CD4-positive, alpha-beta memory T cell (primary cell): ENCODE measurements at regions of chr11 and their contacts with region 1.

Region 1: DNA sequence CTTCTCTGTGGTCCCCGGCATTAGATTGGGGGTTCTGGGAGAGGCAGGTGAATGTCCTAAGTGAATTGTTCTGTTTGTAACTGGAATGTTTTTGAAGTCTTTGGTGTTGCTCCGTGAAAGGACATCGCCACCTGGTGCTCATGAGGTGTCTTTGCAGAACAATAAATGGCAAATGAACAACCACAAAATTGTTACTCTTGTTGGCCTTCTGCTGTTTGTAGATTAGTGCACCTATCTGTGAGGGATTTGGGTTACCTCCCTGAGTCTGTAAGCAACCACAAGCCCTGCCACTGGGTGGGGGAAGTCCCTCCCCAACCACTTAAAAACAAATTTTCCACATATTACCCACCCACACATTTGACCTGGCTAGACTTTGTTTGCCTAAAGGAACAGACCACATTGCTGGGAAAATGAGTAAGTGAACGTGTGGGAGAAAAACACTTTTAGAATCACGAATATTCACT is 4.7 kb downstream of the MPEG1 start:
- DNase-seq: peak; percentile 40 to 57 (median 53)
- H3K4me3 ChIP-seq: no peak overlapping the region
- H3K4me3 Mint-ChIP-seq: peak overlapping the region in 7 of 8 donors; percentile 40 to 82 (median 68)
- H3K27ac ChIP-seq: no peak overlapping the region
- H3K27ac Mint-ChIP-seq: peak overlapping the region in 6 of 7 donors; percentile 53 to 95 (median 86)
- H3K4me1 ChIP-seq: peaks cover 15% of the 10 kb centered on the region
- H3K4me1 Mint-ChIP-seq: peaks cover 11 to 33% (median 22%) of the 10 kb centered on the region in 4 donors
- H3K27me3 ChIP-seq: no peaks in the 10 kb centered on the region
- H3K27me3 Mint-ChIP-seq: no peaks in the 10 kb centered on the region

Region 2: GRCh38 chr11:59180168-59180776 is 27.7 kb before region 1 on chr11:
- CTCF ChIA-PET with region 1: interaction called, 26 read pairs
- POLR2A ChIA-PET with region 1: no interaction called
- intact Hi-C with region 1: no loop called
- DNase-seq: no peak
- H3K4me3 ChIP-seq: no peak overlapping the region
- H3K4me3 Mint-ChIP-seq: no peak overlapping the region
- H3K27ac ChIP-seq: no peak overlapping the region
- H3K27ac Mint-ChIP-seq: no peak overlapping the region
- H3K4me1 ChIP-seq: no peaks in the 10 kb centered on the region
- H3K4me1 Mint-ChIP-seq: peaks cover 0 to 1% (median 0%) of the 10 kb centered on the region in 4 donors
- H3K27me3 ChIP-seq: no peaks in the 10 kb centered on the region
- H3K27me3 Mint-ChIP-seq: no peaks in the 10 kb centered on the region

Region 3: GRCh38 chr11:59186130-59186594 is 21.9 kb before region 1 on chr11:
- CTCF ChIA-PET with region 1: interaction called, 26 read pairs
- POLR2A ChIA-PET with region 1: no interaction called
- intact Hi-C with region 1: no loop called
- DNase-seq: peak; percentile 37 to 56 (median 43)
- H3K4me3 ChIP-seq: no peak overlapping the region
- H3K4me3 Mint-ChIP-seq: no peak overlapping the region
- H3K27ac ChIP-seq: no peak overlapping the region
- H3K27ac Mint-ChIP-seq: no peak overlapping the region
- H3K4me1 ChIP-seq: no peaks in the 10 kb centered on the region
- H3K4me1 Mint-ChIP-seq: no peaks in the 10 kb centered on the region
- H3K27me3 ChIP-seq: no peaks in the 10 kb centered on the region
- H3K27me3 Mint-ChIP-seq: peaks cover 0 to 2% of the 10 kb centered on the region in 2 donors

Region 4: DNA sequence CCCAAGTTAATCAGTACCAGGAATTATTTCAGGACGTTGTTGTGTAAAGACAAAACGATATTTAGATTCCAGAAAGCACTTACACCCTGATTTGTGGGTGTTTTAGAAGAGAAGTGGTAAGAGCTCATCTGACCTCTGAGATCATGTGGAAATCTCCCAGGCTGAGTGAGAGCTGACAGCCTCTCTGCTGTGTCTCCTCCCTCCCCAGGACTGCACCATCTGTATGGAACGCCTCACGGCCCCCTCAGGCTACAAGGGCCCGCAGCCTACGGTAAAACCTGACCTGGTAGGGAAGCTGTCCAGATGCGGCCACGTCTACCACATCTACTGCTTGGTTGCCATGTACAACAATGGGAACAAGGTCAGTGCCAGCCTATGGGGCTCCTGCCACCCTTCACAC is 16.1 kb before region 1 on chr11:
- CTCF ChIA-PET with region 1: interaction called, 26 read pairs
- POLR2A ChIA-PET with region 1: no interaction called
- intact Hi-C with region 1: no loop called
- DNase-seq: no peak
- H3K4me3 ChIP-seq: no peak overlapping the region
- H3K4me3 Mint-ChIP-seq: no peak overlapping the region
- H3K27ac ChIP-seq: no peak overlapping the region
- H3K27ac Mint-ChIP-seq: no peak overlapping the region
- H3K4me1 ChIP-seq: no peaks in the 10 kb centered on the region
- H3K4me1 Mint-ChIP-seq: peaks cover 0 to 4% (median 3%) of the 10 kb centered on the region in 4 donors
- H3K27me3 ChIP-seq: no peaks in the 10 kb centered on the region
- H3K27me3 Mint-ChIP-seq: peaks cover 0 to 2% of the 10 kb centered on the region in 2 donors

Region 5: DNA sequence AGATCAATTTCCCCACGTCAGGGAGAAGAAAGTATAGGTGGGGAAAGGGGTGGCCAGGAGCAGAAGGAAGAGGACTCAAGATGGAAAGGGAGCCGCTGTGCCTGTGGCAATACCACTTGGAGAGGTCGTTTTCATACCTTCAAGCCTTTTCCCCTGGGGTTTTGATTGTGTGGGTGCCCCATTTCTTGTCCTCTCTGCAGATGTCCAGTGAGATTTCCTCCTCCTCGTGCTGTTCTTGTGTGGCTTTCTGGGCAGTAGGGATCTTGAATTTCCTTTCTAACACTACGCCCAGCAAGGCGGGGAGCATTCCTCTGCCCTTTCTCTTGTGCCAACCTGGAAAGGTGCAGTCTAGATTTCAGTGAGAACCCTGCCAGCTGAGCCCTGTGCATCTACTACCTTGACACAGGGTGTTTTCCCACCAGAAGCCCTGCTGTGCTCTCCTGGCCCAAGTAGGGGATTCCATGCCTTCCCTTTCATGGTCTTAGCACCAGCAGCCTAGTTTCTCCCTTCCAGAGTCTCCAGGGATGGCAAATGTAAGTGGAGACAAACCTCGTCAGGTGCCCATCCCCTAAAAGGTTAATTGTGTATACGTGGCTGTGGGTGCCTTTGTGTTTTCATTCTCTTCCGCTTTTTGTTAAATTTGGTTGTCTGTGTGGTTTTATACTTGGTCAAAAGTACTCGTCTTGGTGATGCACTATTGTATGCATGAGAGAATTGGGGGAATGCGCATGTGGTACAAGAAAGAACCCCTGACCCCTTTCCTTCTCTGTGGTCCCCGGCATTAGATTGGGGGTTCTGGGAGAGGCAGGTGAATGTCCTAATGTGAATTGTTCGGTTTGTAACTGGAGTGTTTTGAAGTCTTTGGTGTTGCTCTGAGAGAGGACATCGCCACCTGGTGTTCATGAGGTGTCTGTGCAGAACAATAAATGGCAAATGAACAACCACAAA is 76.1 kb after region 1 on chr11:
- CTCF ChIA-PET with region 1: interaction called, 4 read pairs
- POLR2A ChIA-PET with region 1: no interaction called
- intact Hi-C with region 1: loop called (anchors 1 kb)
- DNase-seq: peak; percentile 55 to 65 (median 64)
- H3K4me3 ChIP-seq: peak overlapping the region in 1 of 2 donors; percentile 23
- H3K4me3 Mint-ChIP-seq: peak overlapping the region; percentile 38 to 85 (median 72)
- H3K27ac ChIP-seq: no peak overlapping the region
- H3K27ac Mint-ChIP-seq: peak overlapping the region in 4 of 7 donors; percentile 6 to 62 (median 34)
- H3K4me1 ChIP-seq: peaks cover 15% of the 10 kb centered on the region
- H3K4me1 Mint-ChIP-seq: peaks cover 10 to 19% (median 15%) of the 10 kb centered on the region in 4 donors
- H3K27me3 ChIP-seq: no peaks in the 10 kb centered on the region
- H3K27me3 Mint-ChIP-seq: peaks cover 3 to 4% of the 10 kb centered on the region in 2 donors

Region 6: GRCh38 chr11:59335001-59335400 is 127.0 kb after region 1 on chr11:
- CTCF ChIA-PET with region 1: no interaction called
- POLR2A ChIA-PET with region 1: no interaction called
- intact Hi-C with region 1: no loop called
- DNase-seq: no peak
- H3K4me3 ChIP-seq: no peak overlapping the region
- H3K4me3 Mint-ChIP-seq: no peak overlapping the region
- H3K27ac ChIP-seq: no peak overlapping the region
- H3K27ac Mint-ChIP-seq: no peak overlapping the region
- H3K4me1 ChIP-seq: no peaks in the 10 kb centered on the region
- H3K4me1 Mint-ChIP-seq: no peaks in the 10 kb centered on the region
- H3K27me3 ChIP-seq: no peaks in the 10 kb centered on the region
- H3K27me3 Mint-ChIP-seq: peaks cover 14 to 17% of the 10 kb centered on the region in 2 donors